Left colon (tissue), 2 donors: ENCODE measurements at regions of chr16 and their contacts with region 1.

Region 1: DNA sequence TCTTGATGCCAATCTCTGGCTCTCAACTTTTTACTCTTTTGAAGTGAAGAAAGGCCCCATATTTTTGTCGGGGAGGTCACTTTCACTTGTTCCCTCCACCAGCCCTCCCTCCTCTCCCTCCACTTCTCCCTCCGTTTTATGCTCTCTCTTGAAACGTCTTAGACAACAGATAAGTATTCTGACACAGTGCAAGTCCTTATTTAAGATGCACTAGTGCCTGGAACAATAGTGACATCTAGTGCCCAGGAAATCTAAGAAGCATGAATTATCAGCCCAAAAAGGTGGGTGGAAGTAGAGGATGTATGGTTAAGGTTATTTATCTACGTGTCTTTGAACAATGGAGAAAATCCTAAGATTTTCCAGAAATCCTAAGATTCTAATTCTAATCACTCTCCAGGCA is 17.9 kb downstream of the PSME3IP1 start:
- DNase-seq: no peak
- ATAC-seq: peak; percentile 88

Region 2: GRCh38 chr16:56851671-56852400 is 316.1 kb before region 1 on chr16:
- intact Hi-C with region 1: no loop called
- DNase-seq: no peak
- ATAC-seq: no peak

Region 3: DNA sequence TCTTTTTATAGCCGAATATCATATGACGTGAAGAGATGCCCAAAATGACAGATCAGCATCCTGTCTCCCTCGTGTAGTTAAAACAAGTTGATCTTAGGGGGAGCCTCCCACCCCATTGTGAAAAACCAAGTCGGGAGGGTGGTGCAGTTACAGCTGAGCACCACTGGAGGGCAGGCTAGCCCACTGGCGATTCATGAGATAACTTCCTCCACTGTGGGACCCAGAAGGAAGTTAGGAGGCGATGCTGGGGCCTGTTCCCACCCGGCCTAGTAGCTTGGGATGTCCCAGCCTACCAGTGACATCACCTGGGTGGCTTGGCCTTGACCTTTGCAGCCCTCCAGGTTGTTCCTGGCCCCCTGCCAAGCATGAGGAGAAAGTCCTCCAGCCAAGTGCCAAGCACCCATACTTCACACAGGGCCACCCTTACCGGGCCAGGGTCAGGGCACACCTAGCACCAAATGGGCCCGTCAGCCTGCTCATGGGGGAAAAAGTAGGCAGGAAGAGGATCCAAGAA is 83.6 kb before region 1 on chr16:
- intact Hi-C with region 1: loop called (anchors 5 kb)
- DNase-seq: peak; percentile 65 to 70
- ATAC-seq: peak; percentile 78

Region 4: GRCh38 chr16:57091975-57092785 is 75.8 kb before region 1 on chr16 and contains the start of gene CPNE2:
- intact Hi-C with region 1: loop called in 1 of 2 experiments (anchors 5 kb)
- DNase-seq: peak; percentile 71 to 72
- ATAC-seq: peak; percentile 68
- total RNA-seq, gene CPNE2: 73.2 to 91.0 TPM